Dorsolateral prefrontal cortex (tissue), 120 donors: ENCODE measurements at regions of chr2 and their contacts with region 1.

Region 1: DNA sequence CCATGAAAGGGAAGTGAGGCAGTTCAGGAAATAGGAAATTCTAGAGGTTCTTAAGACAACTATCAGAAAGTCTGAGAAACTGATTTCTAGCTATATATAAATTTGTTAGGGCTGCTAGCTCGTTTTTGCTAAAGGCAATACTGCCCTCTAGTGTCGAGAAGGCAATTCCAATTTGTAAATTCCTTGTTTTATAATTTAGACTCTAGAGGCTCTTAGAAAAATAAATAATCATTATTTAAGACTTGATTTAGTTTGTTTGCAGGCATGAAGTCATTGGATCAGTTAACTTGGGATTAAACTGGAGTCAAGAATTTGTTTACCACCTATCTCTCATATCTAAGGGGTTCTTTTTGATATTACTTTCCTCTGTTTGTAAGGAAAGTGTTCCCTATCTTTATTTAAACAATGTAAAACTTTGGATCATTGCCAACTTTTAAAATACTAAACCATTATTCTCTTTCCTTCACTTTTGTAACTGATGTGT is 66.2 kb downstream of the ACVR2A start:
- DNase-seq: peak in 1 of 10 donors; percentile 23
- H3K4me3 ChIP-seq: no peak overlapping the region
- H3K27ac ChIP-seq: peak overlapping the region in 1 of 59 donors; percentile 2
- H3K27me3 ChIP-seq: no peaks in the 10 kb centered on the region
- CTCF ChIP-seq: peak; percentile 81 to 99 (median 92)

Region 2: GRCh38 chr2:146312899-146313298 is 1598.1 kb before region 1 on chr2:
- intact Hi-C with region 1: no loop called
- DNase-seq: no peak
- H3K4me3 ChIP-seq: no peak overlapping the region
- H3K27ac ChIP-seq: no peak overlapping the region
- H3K27me3 ChIP-seq: no peaks in the 10 kb centered on the region
- CTCF ChIP-seq: peak in 45 of 56 donors; percentile 16 to 66 (median 34)

Region 3: DNA sequence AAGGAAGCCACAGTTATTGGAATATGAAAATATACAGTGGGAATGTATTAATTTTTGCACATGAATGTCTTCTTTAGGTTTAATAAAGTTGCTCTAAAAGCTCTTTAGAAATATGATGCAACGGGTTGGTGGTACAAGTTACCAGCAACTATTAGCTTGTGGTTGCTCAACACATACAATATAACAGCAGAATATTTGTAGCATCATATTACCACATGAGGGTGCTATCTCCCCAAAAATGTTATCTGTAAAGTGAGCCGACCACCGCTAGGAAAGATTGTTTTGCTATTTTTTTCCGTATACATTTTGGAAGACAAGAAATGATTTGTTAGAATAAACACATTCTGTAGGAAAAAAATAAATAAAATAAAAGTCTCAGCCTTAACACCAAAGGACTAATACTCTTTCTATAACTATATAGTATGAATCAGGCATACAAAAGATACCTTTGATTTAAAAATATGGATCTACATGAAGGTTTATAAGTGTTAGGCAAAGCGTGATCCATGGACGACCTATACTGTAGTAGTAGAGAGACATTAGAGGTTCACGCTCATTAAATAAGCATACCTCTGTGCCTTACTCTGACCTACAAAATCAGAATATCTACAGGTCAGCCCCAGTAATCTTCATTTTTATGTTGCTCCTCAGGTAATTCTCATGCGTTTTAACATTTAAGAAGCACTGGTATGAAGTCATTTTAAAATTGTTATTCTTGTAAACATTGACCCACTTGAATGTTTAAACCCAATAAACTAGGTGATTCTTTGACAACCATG is 1176.8 kb before region 1 on chr2:
- intact Hi-C with region 1: loop called in 1 of 2 experiments (anchors 10 kb)
- DNase-seq: no peak
- H3K4me3 ChIP-seq: peak overlapping the region in 2 of 59 donors; percentile 4 to 11
- H3K27ac ChIP-seq: no peak overlapping the region
- H3K27me3 ChIP-seq: no peaks in the 10 kb centered on the region
- CTCF ChIP-seq: peak; percentile 57 to 85 (median 69)

Region 4: DNA sequence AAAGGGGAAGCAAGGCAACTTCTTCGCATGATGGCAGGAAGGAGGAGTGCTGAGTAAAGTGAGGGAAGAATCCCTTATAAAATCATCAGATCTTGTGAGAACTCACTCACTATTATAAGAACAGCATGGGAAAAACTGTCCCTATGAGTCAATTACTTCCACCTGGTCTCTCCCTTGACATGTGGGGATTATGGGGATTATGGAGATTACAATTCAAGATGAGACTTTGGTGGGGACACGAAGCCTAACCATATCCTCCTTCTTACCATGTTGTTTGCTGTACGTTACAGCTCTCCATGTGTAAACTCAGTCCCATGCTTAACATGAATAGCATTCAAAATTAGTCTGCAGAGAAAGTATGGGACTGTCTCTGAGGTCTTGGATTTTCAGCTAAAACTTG is 1163.0 kb before region 1 on chr2:
- intact Hi-C with region 1: loop called in 1 of 2 experiments (anchors 10 kb)
- DNase-seq: no peak
- H3K4me3 ChIP-seq: no peak overlapping the region
- H3K27ac ChIP-seq: no peak overlapping the region
- H3K27me3 ChIP-seq: peaks cover 0 to 6% (median 0%) of the 10 kb centered on the region in 45 donors
- CTCF ChIP-seq: no peak

Region 5: GRCh38 chr2:146927080-146927711 is 983.8 kb before region 1 on chr2:
- intact Hi-C with region 1: loop called (anchors 5 to 10 kb)
- DNase-seq: peak in 9 of 10 donors; percentile 27 to 64 (median 51)
- H3K4me3 ChIP-seq: no peak overlapping the region
- H3K27ac ChIP-seq: no peak overlapping the region
- H3K27me3 ChIP-seq: no peaks in the 10 kb centered on the region
- CTCF ChIP-seq: peak in 55 of 56 donors; percentile 25 to 77 (median 62)

Region 6: GRCh38 chr2:147045113-147045512 is 865.9 kb before region 1 on chr2:
- intact Hi-C with region 1: loop called in 1 of 2 experiments (anchors 2 kb)
- DNase-seq: peak in 2 of 10 donors; percentile 26 to 55
- H3K4me3 ChIP-seq: no peak overlapping the region
- H3K27ac ChIP-seq: no peak overlapping the region
- H3K27me3 ChIP-seq: peaks cover 0 to 3% (median 0%) of the 10 kb centered on the region in 45 donors
- CTCF ChIP-seq: peak; percentile 36 to 80 (median 65)

Region 7: GRCh38 chr2:147082850-147083522 is 828.0 kb before region 1 on chr2:
- intact Hi-C with region 1: loop called (anchors 2 to 10 kb)
- DNase-seq: peak in 5 of 10 donors; percentile 33 to 64 (median 40)
- H3K4me3 ChIP-seq: no peak overlapping the region
- H3K27ac ChIP-seq: peak overlapping the region in 7 of 59 donors; percentile 1 to 50 (median 5)
- H3K27me3 ChIP-seq: no peaks in the 10 kb centered on the region
- CTCF ChIP-seq: peak; percentile 76 to 98 (median 92)

Region 8: GRCh38 chr2:147843864-147844696 is 67.0 kb before region 1 on chr2:
- intact Hi-C with region 1: loop called (anchors 5 to 10 kb)
- DNase-seq: peak; percentile 74 to 94 (median 88)
- H3K4me3 ChIP-seq: peak overlapping the region; percentile 63 to 96 (median 84)
- H3K27ac ChIP-seq: peak overlapping the region; percentile 79 to 99 (median 97)
- H3K27me3 ChIP-seq: no peaks in the 10 kb centered on the region
- CTCF ChIP-seq: peak in 34 of 56 donors; percentile 8 to 48 (median 30)